ENCODE measurements at regions of chr2 and their contacts with region 1.

Region 1: GRCh38 chr2:181715033-181715630 is 34.8 kb upstream of the NEUROD1 start:
- DNase-seq: peak; percentile 88
- ATAC-seq: peak; percentile 80
- H3K4me3 Mint-ChIP-seq: no peak overlapping the region
- H3K27ac Mint-ChIP-seq: no peak overlapping the region
- H3K4me1 Mint-ChIP-seq: no peaks in the 10 kb centered on the region
- H3K27me3 Mint-ChIP-seq: no peaks in the 10 kb centered on the region
- CTCF ChIP-seq: peak; percentile 66

Region 2: DNA sequence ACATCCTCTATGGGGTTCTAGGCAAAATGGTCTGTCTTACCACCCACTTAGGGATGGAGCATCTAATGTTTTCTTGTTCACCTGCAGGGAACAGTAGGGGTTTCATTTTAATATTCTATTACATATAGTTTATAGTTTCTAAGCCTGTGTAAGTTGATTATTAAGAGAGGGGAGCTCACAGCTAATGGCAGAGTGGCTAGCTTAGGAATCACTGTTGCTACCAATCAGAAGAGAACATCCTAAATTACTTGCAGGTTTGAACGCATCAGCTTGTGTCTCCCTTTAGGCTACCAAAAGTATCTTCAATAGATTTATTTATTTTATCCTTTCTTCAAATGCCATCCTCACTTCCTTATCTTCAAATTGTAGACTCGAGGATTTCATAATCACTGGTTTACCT is 1277.6 kb before region 1 on chr2:
- CTCF ChIA-PET with region 1: no interaction called
- POLR2A ChIA-PET with region 1: no interaction called
- intact Hi-C with region 1: loop called (anchors 10 kb)
- DNase-seq: no peak
- ATAC-seq: no peak
- H3K4me3 Mint-ChIP-seq: no peak overlapping the region
- H3K27ac Mint-ChIP-seq: no peak overlapping the region
- H3K4me1 Mint-ChIP-seq: no peaks in the 10 kb centered on the region
- H3K27me3 Mint-ChIP-seq: no peaks in the 10 kb centered on the region
- CTCF ChIP-seq: no peak

Region 3: DNA sequence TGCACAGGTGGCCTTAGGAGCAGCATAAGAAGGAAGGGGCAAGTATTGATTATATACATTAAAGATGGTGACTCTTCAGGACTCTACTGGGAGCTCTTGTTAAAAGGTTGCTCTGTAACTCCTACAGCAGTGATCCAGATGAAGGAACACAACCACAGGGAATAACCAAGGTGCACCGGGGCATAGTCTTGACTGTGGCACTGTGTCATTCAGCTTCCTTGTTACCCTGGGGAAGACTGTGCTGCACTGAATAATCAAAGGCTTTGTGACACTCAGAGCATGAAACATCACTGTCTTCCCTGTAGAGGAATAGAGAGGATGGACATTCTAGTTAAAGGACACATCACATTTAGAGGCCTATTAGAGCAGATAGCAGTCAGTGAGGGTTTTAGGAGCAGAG is 629.4 kb before region 1 on chr2:
- CTCF ChIA-PET with region 1: interaction called, 13 read pairs
- POLR2A ChIA-PET with region 1: no interaction called
- intact Hi-C with region 1: no loop called
- DNase-seq: no peak
- ATAC-seq: no peak
- H3K4me3 Mint-ChIP-seq: no peak overlapping the region
- H3K27ac Mint-ChIP-seq: no peak overlapping the region
- H3K4me1 Mint-ChIP-seq: no peaks in the 10 kb centered on the region
- H3K27me3 Mint-ChIP-seq: no peaks in the 10 kb centered on the region
- CTCF ChIP-seq: no peak

Region 4: DNA sequence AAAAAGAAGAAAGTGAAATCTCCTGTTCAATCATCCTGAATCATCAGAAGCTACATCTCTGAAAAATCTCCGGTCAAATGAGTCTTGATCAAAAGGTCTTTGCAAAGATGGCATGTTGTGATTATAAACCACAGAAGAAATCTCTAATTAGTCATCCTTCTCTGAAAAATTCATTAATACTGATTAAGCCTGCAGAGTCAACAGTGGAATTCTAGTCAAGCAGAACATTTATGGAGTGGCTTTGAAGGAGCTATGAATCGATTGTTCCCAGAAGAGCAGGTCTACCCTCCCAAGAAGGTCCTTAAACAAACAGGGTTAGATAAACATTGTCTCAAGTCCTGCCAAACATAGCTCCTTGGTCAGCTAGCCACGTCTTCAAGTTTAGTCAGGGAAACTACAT is 169.1 kb before region 1 on chr2:
- CTCF ChIA-PET with region 1: interaction called, 12 read pairs
- POLR2A ChIA-PET with region 1: no interaction called
- intact Hi-C with region 1: no loop called
- DNase-seq: no peak
- ATAC-seq: no peak
- H3K4me3 Mint-ChIP-seq: no peak overlapping the region
- H3K27ac Mint-ChIP-seq: no peak overlapping the region
- H3K4me1 Mint-ChIP-seq: peaks cover 7% of the 10 kb centered on the region
- H3K27me3 Mint-ChIP-seq: no peaks in the 10 kb centered on the region
- CTCF ChIP-seq: no peak

Region 5: DNA sequence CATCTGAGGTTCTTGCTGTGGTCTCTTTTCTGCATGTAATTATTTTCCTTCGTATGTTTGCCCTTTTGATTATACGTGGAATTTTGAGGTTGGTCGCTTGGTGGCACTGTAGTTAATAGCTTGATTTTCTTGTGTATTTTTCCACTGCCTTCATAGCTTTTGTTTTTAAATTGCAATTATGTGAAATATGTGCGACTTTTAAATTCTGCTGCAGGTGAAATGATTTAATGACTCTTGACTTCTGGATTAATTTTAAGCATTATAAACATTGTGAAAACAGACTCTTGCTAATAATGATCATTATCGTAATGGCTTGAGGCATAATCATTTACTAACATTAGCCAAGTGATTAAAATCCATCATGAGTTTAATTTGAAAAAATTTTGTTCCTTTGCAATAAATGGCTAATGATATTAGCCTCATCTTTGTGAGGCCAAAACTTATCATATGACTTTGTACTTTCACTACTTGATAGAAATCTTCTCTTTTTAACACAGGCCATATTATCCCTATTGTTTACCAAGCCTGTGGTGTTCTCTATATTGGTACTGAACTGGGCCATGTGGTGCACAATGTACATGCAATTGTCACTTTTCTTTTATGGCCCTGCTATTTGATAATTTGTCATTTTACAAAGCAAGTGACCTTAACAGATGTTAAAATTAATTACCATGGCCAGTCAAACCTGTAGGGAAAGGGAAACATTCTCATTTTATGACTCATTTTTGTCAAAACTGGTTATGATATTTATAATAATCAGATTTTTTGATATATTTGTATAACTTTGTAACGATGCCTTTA is 28.0 kb after region 1 on chr2:
- CTCF ChIA-PET with region 1: interaction called, 15 read pairs
- POLR2A ChIA-PET with region 1: no interaction called
- intact Hi-C with region 1: no loop called
- DNase-seq: peak; percentile 56
- ATAC-seq: peak; percentile 49
- H3K4me3 Mint-ChIP-seq: no peak overlapping the region
- H3K27ac Mint-ChIP-seq: no peak overlapping the region
- H3K4me1 Mint-ChIP-seq: no peaks in the 10 kb centered on the region
- H3K27me3 Mint-ChIP-seq: peaks cover under 1% of the 10 kb centered on the region
- CTCF ChIP-seq: peak; percentile 64

Region 6: GRCh38 chr2:181770145-181770544 is 55.0 kb after region 1 on chr2:
- CTCF ChIA-PET with region 1: no interaction called
- POLR2A ChIA-PET with region 1: no interaction called
- intact Hi-C with region 1: no loop called
- DNase-seq: no peak
- ATAC-seq: no peak
- H3K4me3 Mint-ChIP-seq: no peak overlapping the region
- H3K27ac Mint-ChIP-seq: no peak overlapping the region
- H3K4me1 Mint-ChIP-seq: peaks cover 5% of the 10 kb centered on the region
- H3K27me3 Mint-ChIP-seq: peaks cover 5% of the 10 kb centered on the region
- CTCF ChIP-seq: no peak

Region 7: GRCh38 chr2:181937473-181937872 is 222.3 kb after region 1 on chr2:
- CTCF ChIA-PET with region 1: no interaction called
- POLR2A ChIA-PET with region 1: no interaction called
- intact Hi-C with region 1: no loop called
- DNase-seq: no peak
- ATAC-seq: no peak
- H3K4me3 Mint-ChIP-seq: no peak overlapping the region
- H3K27ac Mint-ChIP-seq: no peak overlapping the region
- H3K4me1 Mint-ChIP-seq: no peaks in the 10 kb centered on the region
- H3K27me3 Mint-ChIP-seq: peaks cover 3% of the 10 kb centered on the region
- CTCF ChIP-seq: no peak

Region 8: DNA sequence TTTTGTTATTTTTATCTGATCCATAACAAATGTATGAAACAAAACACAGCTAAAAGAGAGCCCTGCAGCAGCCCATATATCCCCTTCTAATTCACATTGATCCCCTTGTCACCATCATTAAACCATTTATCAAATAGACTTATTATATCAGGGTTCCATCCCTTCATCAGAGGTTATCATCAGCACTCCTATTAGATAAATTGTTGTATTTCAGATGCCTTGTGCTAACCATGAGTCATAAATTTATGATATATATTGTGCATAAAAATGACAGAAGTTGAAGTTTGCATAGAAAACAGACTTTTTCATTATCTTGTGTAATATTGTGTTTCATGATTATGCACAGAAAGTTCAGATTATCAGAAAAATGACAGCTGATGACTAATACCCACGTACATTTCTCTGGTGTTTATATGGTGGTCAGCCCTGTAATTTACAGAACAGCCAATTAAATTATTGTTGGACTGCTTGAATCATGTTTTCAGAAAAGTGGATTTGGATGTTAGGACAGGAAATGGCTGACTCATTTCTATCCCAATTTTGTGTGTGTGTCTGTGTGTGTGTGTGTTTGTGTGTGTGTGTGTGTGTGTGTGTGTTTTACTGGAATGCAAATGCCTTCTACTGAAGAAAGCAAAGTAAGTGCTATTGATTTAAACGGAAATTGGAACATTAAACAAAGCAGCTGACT is 351.4 kb after region 1 on chr2:
- CTCF ChIA-PET with region 1: no interaction called
- POLR2A ChIA-PET with region 1: no interaction called
- intact Hi-C with region 1: no loop called
- DNase-seq: no peak
- ATAC-seq: no peak
- H3K4me3 Mint-ChIP-seq: no peak overlapping the region
- H3K27ac Mint-ChIP-seq: no peak overlapping the region
- H3K4me1 Mint-ChIP-seq: no peaks in the 10 kb centered on the region
- H3K27me3 Mint-ChIP-seq: no peaks in the 10 kb centered on the region
- CTCF ChIP-seq: no peak